ENCODE measurements at regions of chr12 and their contacts with region 1.

Region 1: GRCh38 chr12:64256166-64256800 is 34.2 kb upstream of the KICS2 start:
- DNase-seq: no peak
- H3K4me3 ChIP-seq: no peak overlapping the region
- H3K27me3 ChIP-seq: no peaks in the 10 kb centered on the region
- CTCF ChIP-seq: peak; percentile 55

Region 2: GRCh38 chr12:63826006-63826585 is 430.2 kb before region 1 on chr12:
- CTCF ChIA-PET with region 1: interaction called, 78 read pairs
- POLR2A ChIA-PET with region 1: no interaction called
- DNase-seq: no peak
- H3K4me3 ChIP-seq: no peak overlapping the region
- H3K27me3 ChIP-seq: no peaks in the 10 kb centered on the region
- CTCF ChIP-seq: peak; percentile 81

Region 3: DNA sequence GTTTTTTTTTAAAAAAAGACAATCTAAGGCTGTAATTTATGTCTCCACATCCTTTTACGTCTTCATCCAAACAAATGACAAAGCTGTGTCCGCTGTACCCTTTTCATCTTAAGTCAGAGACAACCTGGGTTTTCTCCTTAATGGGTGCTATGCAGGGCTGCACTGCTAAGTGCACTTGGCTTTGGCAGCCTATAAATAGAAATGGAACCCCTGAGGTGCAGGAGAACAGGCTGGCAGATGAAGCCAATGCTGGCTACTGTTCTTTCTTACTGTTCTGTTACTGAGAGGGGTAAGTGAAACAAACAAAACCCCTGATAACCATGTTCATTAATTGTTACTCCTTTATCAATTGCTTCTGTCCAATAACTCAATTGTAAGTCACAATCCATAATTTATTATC is 12.9 kb after region 1 on chr12:
- CTCF ChIA-PET with region 1: interaction called, 10 read pairs
- POLR2A ChIA-PET with region 1: no interaction called
- DNase-seq: no peak
- H3K4me3 ChIP-seq: no peak overlapping the region
- H3K27me3 ChIP-seq: peaks cover 3% of the 10 kb centered on the region; the same call in 1 of the 2 replicates
- CTCF ChIP-seq: no peak

Region 4: DNA sequence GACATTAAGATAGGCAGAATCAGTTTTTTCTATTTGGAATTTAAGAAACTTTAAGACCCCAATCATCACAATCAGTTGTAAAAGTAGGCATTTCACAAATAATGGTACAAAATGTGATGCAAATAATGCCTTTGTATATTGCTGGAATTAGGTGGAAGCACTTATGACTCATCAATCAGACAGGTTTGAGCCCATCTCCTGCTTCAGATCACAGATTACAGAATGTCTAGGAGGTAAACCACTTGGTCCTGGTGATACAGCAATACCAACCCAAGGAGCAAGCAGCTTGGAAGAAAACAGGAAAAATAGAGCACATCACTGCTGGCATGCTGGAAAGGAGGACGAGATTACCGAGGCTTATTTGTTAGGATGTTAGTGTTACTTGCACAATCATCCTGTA is 76.7 kb after region 1 on chr12:
- CTCF ChIA-PET with region 1: no interaction called
- POLR2A ChIA-PET with region 1: no interaction called
- DNase-seq: no peak
- H3K4me3 ChIP-seq: no peak overlapping the region
- H3K27me3 ChIP-seq: peaks cover 2% of the 10 kb centered on the region; the same call in 1 of the 2 replicates
- CTCF ChIP-seq: no peak